Panc1 (cell line): ENCODE measurements at regions of chr1 and their contacts with region 1.

Region 1: DNA sequence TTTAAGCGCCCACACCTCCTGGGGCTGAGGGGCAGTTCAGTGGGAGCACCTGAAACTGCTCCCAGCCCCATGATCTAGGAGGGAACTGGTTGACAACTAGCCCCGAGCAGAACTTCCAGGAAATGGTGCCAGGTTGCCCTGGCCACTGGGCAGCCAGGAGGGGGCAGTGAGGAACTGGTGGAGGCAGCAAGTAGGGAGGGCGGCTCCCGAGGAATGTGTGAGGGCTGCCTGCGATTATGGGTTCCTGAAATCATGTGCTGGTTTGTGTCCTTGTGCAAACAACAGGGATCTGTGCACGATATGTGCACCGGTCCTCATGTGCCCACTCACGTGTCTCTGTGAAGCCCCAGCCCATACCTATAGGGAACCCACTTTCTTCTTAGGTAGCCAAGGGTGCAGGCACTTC is 9.9 kb downstream of the GPR3 start:
- DNase-seq: no peak
- ATAC-seq: peak; percentile 47; the same call in 1 of the 2 replicates
- H3K4me3 ChIP-seq: no peak overlapping the region
- H3K27ac ChIP-seq: no peak overlapping the region
- H3K4me1 ChIP-seq: no peaks in the 10 kb centered on the region; the same call in 1 of the 2 replicates
- H3K27me3 ChIP-seq: no peaks in the 10 kb centered on the region
- CTCF ChIP-seq: peak; percentile 64

Region 2: DNA sequence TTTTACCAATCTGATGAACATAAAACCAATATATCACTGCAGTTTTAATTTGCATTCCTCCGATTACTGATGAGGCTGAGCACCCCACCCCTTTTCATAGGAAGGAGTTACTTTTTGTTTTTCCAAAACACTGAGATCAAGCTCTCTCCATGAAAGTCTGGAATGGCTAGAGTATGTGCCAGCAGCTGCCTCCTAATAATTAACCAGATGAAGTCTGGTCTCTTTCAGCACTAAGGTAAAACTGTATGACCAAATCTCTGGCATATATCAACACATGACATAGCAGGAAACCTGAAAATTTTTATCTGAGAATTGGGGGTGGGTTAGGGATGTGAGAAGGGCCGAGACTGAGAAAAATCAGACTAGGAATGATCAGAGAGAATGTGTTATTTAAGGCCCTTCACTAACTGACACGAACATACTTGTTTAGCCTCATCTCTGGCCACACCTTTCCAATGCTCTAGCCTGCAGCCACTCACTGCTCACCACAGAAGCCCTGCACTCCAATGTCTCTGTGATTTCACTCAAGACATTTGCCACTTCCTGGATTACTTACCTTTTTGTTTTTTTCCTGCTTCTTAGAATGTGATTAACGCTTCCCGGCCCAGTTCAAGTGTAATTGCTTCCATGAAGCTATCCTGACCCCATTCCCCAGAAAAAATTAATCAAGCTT is 52.9 kb after region 1 on chr1:
- CTCF ChIA-PET with region 1: no interaction called
- POLR2A ChIA-PET with region 1: interaction called, 14 read pairs
- in situ Hi-C with region 1: no loop called
- intact Hi-C with region 1: no loop called
- DNase-seq: no peak
- ATAC-seq: no peak
- H3K4me3 ChIP-seq: no peak overlapping the region
- H3K27ac ChIP-seq: no peak overlapping the region
- H3K4me1 ChIP-seq: no peaks in the 10 kb centered on the region
- H3K27me3 ChIP-seq: no peaks in the 10 kb centered on the region
- CTCF ChIP-seq: no peak